SK-N-SH (cell line): ENCODE measurements at regions of chr15 and their contacts with region 1.

Region 1: DNA sequence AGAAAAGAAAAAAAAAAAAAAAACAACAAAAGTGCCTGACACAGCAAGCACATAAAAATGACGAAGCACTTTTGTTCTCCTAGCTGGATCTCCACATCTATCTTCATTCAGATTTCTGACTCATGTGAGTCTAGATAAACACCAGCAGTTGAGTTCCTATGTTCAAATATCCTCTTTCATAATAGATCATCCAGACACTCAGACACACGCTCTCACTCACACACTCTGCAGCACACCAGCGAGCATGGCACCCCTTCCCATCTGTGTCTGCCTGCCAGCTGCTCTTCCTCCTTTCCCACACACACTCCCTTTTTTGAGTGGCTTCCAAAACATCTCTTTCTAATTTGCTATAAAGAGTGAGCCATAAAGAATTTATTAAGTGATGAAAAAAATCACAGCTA is 19.8 kb upstream of the CELF6 start:
- DNase-seq: peak; percentile 62
- H3K4me3 ChIP-seq: no peak overlapping the region
- H3K27ac ChIP-seq: peak overlapping the region; percentile 67 to 80
- H3K4me1 ChIP-seq: peaks cover 0 to 10% of the 10 kb centered on the region in 2 experiments
- H3K27me3 ChIP-seq: no peaks in the 10 kb centered on the region
- CTCF ChIP-seq: no peak
- EP300 ChIP-seq: peak in 1 of 2 experiments; percentile 28; a peak in 1 of 4 replicates
- RAD21 ChIP-seq: no peak

Region 2: DNA sequence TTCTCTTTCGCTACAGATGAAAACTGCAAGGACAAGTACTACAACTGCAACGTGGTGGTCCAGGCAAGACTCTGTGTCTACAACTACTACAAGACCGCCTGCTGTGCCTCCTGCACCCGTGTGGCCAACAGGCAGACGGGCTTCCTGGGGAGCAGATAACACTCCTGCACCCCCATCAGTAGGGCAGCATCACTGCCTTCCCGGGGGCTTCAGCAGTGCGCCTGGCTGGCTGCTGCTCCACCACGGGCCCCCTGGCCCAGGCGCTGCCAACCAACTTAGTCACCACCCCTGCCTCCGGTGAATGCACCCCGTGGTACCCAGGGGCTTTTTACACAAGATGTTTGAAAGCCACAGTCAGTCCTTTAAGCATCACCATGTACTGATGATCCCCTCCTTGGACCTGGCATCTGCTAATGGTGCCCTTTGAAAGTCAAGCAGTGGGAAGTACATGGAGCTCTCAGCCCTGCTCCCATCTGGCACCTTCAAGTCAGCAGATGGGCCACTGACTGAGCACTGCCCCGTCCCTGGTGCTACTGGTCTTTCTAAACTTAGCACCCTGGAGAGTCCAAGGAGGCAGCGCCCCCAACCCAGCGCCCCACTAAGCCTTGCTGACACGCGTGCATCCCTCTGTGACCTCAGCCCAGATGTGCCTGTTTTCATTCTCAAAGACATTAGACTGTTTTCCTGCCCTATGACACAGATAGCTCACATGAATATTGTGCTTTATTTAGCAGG is 562.4 kb before region 1 on chr15:
- CTCF ChIA-PET with region 1: no interaction called
- POLR2A ChIA-PET with region 1: no interaction called
- DNase-seq: no peak
- H3K4me3 ChIP-seq: no peak overlapping the region
- H3K27ac ChIP-seq: no peak overlapping the region
- H3K4me1 ChIP-seq: peaks cover 0 to 5% of the 10 kb centered on the region in 2 experiments; a peak in 1 of 4 replicates
- H3K27me3 ChIP-seq: no peaks in the 10 kb centered on the region
- CTCF ChIP-seq: no peak
- EP300 ChIP-seq: no peak
- RAD21 ChIP-seq: no peak

Region 3: DNA sequence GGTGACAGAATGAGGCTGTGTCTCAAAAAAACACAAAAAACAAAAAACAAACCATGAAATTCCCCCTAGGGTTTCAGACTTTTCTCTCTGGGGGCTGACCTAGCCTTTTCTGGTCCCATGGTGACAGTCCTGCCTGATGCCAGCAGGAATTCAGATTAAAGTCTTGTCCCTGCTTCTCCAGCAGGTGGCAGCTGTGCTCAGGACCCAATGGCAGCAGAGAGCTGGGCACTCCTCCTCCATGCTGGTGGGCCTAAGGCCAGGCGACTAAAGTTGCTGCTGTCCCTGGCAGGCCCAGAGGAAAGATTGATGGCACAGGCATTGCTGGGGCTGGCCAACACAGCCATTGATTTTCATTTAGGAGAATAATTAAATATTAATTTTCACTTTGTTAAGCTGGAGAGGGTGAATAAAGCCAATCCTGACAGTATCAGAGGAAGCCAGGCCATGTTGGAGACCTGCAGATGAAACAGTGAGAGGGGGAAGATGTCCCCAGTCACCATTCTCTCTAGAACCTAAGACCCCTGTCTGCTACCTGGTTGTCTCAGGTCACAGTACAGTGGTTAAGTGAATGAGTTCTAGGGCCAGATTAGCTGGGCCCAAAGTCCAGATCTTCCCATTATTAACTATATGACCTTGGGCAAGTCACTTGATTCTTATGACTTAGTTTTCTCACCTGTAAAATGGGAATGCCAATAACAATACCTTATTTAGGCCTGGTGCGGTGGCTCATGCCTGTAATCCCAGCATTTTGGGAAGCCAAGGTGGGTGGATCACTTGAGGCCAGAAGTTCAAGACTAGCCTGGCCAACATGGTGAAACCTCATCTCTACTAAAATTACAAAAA is 27.0 kb before region 1 on chr15:
- CTCF ChIA-PET with region 1: interaction called, 14 read pairs
- POLR2A ChIA-PET with region 1: no interaction called
- DNase-seq: peak; percentile 81
- H3K4me3 ChIP-seq: no peak overlapping the region; a peak in 1 of 4 replicates
- H3K27ac ChIP-seq: no peak overlapping the region
- H3K4me1 ChIP-seq: peaks cover 0 to 9% of the 10 kb centered on the region in 2 experiments; a peak in 1 of 4 replicates
- H3K27me3 ChIP-seq: peaks cover 4% of the 10 kb centered on the region; the same call in 1 of the 2 replicates
- CTCF ChIP-seq: peak; percentile 78
- EP300 ChIP-seq: no peak
- RAD21 ChIP-seq: peak; percentile 88

Region 4: GRCh38 chr15:72369964-72370363 is 30.2 kb after region 1 on chr15:
- CTCF ChIA-PET with region 1: no interaction called
- POLR2A ChIA-PET with region 1: no interaction called
- DNase-seq: no peak
- H3K4me3 ChIP-seq: no peak overlapping the region
- H3K27ac ChIP-seq: no peak overlapping the region
- H3K4me1 ChIP-seq: peaks cover 4 to 6% of the 10 kb centered on the region in 2 experiments; a peak in 3 of 4 replicates
- H3K27me3 ChIP-seq: no peaks in the 10 kb centered on the region
- CTCF ChIP-seq: no peak
- EP300 ChIP-seq: no peak
- RAD21 ChIP-seq: no peak